Activated naive CD4-positive, alpha-beta T cell treated with anti-CD3 and anti-CD28 coated beads for 36 hours (primary cell): ENCODE measurements at regions of chr3 and their contacts with region 1.

Region 1: DNA sequence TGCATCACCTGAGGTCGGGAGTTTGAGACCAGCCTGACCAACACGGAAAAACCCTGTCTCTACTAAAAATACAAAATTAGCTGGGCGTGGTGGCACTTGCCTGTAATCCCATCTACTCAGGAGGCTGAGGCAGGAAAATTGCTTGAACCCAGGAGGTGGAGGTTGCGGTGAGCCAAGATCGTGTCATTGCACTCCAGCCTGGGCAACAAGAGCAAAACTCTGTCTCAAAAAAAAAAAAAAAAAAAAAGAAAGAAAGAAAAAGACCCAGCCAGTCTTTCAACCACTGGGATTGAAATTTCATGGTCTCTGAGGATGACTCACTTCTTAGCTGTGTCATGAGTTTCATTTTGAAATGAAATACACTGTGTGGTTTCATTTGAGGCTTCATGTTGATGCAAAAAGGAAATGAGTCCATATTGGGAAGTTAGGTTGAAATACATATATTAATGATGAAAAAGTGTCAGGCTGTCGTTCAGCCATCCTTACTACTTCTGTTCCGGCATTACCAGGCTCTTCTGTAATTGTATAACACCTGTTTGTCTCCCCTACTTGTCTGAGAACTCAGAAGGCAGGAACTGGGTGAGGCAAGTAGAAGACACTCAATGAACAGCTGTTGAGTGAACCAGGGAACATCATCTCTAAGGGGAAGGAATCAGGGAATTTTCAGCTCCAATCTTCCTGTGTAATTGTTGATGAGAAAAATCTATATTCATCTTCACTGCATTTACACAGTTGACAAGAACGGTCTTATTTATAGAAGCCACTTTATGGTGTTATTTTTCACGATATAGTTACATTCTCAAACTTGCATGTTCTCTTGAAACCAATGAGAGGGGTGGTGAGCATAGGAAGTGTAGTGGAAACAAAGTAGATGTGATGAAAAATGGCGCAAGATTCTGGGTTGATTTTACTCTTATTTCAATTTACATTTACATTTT is 87.4 kb downstream of the NFKBIZ start:
- DNase-seq: peak; percentile 33
- H3K4me3 Mint-ChIP-seq: peak overlapping the region; percentile 0
- H3K27ac Mint-ChIP-seq: peak overlapping the region; percentile 57
- H3K4me1 Mint-ChIP-seq: peaks cover 32% of the 10 kb centered on the region
- H3K27me3 Mint-ChIP-seq: peaks cover 2% of the 10 kb centered on the region

Region 2: DNA sequence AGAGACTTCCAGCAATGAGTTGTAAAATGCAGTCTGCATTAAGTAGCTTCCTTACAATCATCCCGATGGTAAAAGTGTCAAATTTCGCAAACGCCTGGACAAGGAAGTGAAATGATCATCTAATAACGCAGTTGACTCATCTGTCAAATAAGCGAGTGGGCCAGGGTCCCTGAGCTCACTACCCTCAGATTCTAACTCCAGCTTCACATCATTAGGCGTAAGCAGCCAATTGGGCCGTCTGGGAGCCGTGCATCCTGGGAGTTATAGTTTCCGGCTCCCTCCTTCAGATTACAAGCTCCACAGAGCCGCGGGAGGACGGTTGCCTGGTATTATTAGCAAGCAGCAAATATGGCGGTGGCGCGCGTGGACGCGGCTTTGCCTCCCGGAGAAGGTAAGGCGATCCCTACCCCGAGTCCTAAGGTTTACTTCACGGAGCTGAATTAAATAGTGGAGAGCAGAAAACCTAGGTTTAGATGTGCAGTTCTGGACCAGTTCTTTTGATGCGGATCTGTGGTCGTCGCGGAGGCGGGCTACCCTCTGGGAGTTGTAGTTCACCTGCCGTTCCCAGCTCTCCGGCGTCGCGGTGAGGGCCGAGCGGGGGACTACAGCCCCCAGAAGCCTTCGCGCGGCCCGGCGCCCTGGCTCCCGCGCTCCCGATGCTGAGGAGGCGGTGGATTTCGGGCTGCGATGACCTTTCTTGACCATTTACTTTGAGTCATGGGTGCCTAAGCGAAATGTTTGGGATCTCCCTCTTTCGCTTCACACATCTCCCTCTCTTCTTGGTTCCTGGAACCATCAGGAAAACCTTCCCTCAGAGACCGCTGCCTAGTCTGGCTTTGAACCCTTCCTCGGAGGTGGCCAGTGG is 212.1 kb before region 1 on chr3 and contains the start of gene CEP97:
- CTCF ChIA-PET with region 1: no interaction called
- intact Hi-C with region 1: loop called (anchors 5 kb)
- DNase-seq: peak; percentile 94
- H3K4me3 Mint-ChIP-seq: peak within 1 kb of the TSS; percentile 97
- H3K27ac Mint-ChIP-seq: peak within 1 kb of the TSS; percentile 97
- H3K4me1 Mint-ChIP-seq: peaks cover 33% of the 10 kb centered on the region
- H3K27me3 Mint-ChIP-seq: no peaks in the 10 kb centered on the region
- total RNA-seq, gene CEP97: 17.0 to 20.3 TPM

Region 3: DNA sequence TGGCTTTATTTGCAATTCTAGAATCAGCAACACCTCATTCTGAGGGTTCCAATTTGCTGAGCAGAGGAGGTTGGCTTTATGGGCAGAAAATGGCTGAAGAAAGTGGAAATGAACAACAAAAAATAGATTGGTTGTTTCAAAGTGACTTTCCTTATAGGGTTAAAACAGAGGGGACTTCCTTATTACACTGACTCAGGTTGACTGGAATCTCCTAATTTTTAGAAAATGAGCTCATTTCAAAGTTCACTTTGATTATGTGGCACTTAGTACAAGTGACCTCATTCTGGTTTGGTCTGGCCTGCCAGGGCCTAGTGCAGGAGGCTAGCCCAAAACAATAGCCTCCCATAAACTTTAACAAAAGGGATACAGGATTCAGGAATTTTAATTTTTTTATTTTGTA is 46.0 kb before region 1 on chr3:
- CTCF ChIA-PET with region 1: no interaction called
- intact Hi-C with region 1: loop called (anchors 1 kb)
- DNase-seq: peak; percentile 43
- H3K4me3 Mint-ChIP-seq: no peak overlapping the region
- H3K27ac Mint-ChIP-seq: no peak overlapping the region
- H3K4me1 Mint-ChIP-seq: peaks cover 12% of the 10 kb centered on the region
- H3K27me3 Mint-ChIP-seq: no peaks in the 10 kb centered on the region

Region 4: GRCh38 chr3:101925573-101925972 is 11.1 kb before region 1 on chr3:
- CTCF ChIA-PET with region 1: interaction called, 3 read pairs
- intact Hi-C with region 1: loop called (anchors 1 kb)
- DNase-seq: no peak
- H3K4me3 Mint-ChIP-seq: no peak overlapping the region
- H3K27ac Mint-ChIP-seq: no peak overlapping the region
- H3K4me1 Mint-ChIP-seq: peaks cover 30% of the 10 kb centered on the region
- H3K27me3 Mint-ChIP-seq: no peaks in the 10 kb centered on the region

Region 5: GRCh38 chr3:101988591-101988990 is 51.9 kb after region 1 on chr3:
- CTCF ChIA-PET with region 1: no interaction called
- intact Hi-C with region 1: loop called (anchors 1 kb)
- DNase-seq: peak; percentile 31
- H3K4me3 Mint-ChIP-seq: no peak overlapping the region
- H3K27ac Mint-ChIP-seq: no peak overlapping the region
- H3K4me1 Mint-ChIP-seq: peaks cover 21% of the 10 kb centered on the region
- H3K27me3 Mint-ChIP-seq: no peaks in the 10 kb centered on the region

Region 6: GRCh38 chr3:102053375-102053989 is 116.8 kb after region 1 on chr3:
- CTCF ChIA-PET with region 1: no interaction called
- intact Hi-C with region 1: loop called (anchors 1 kb)
- DNase-seq: peak; percentile 56
- H3K4me3 Mint-ChIP-seq: no peak overlapping the region
- H3K27ac Mint-ChIP-seq: no peak overlapping the region
- H3K4me1 Mint-ChIP-seq: peaks cover 33% of the 10 kb centered on the region
- H3K27me3 Mint-ChIP-seq: no peaks in the 10 kb centered on the region

Region 7: DNA sequence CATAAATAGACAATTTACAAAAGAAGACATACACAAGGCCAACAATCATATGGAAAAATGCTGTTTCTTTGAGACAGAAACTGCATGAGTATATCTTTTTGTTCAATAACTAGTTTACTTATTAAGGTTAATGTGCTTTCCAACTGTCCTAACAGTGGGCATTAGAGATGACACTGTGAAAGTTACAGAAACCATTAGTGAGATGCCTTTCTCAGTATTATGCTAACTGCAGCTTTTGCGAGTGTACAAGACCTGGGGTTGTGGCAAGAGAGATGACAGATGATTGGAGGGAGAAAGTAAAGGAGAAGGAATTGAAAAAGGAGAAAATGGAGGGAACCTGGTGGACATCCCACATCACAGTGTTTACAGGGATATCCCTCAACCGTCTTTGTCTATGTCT is 1138.6 kb after region 1 on chr3:
- CTCF ChIA-PET with region 1: no interaction called
- intact Hi-C with region 1: no loop called
- DNase-seq: no peak
- H3K4me3 Mint-ChIP-seq: no peak overlapping the region
- H3K27ac Mint-ChIP-seq: no peak overlapping the region
- H3K4me1 Mint-ChIP-seq: no peaks in the 10 kb centered on the region
- H3K27me3 Mint-ChIP-seq: no peaks in the 10 kb centered on the region